Motor neuron (in vitro differentiated cells): ENCODE measurements at regions of chr22 and their contacts with region 1.

Region 1: DNA sequence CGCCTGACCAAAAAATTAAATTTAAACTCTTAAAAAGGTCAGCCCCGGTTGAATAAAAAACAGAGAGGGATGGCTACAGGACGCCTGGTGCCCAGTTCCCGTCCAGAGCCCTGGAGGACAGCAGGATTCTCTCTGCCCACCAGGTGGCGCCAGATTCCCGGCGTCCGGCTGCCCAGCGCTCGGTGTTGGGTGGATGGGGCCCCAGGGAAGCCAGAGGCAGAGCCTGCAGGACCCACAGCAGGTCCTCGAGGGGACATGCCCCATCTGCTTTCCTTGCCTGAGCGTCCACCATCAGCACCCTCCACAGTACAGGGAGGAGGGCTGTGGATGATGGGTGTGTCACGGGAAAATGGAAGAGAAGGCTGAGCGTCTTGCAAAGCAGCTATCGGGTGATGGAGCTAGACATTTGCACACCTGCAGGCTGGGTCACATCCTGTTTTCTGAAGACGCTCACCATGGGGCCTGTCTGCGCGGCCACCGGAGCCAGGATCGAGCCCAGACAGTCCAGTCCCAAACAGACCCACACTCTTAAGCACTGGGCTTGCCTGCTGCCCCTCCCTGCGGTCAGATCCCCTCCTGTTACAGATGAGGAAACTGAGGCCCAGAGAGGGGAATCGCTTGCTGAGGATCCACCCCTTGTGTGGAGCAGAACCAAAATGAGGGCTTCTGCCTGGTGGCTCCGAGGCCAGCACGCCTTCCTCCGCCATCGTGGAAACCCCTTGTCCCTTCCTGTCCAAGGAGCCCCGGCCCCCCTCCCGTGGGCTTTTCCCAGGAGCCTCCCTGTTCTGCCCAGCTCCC is 18.5 kb upstream of the CBX7 start:
- ATAC-seq: peak; percentile 76 to 98 (median 80)
- H3K4me3 ChIP-seq: no peak overlapping the region
- H3K27ac ChIP-seq: no peak overlapping the region
- H3K4me1 ChIP-seq: peaks cover 23 to 41% of the 10 kb centered on the region in 2 donors

Region 2: DNA sequence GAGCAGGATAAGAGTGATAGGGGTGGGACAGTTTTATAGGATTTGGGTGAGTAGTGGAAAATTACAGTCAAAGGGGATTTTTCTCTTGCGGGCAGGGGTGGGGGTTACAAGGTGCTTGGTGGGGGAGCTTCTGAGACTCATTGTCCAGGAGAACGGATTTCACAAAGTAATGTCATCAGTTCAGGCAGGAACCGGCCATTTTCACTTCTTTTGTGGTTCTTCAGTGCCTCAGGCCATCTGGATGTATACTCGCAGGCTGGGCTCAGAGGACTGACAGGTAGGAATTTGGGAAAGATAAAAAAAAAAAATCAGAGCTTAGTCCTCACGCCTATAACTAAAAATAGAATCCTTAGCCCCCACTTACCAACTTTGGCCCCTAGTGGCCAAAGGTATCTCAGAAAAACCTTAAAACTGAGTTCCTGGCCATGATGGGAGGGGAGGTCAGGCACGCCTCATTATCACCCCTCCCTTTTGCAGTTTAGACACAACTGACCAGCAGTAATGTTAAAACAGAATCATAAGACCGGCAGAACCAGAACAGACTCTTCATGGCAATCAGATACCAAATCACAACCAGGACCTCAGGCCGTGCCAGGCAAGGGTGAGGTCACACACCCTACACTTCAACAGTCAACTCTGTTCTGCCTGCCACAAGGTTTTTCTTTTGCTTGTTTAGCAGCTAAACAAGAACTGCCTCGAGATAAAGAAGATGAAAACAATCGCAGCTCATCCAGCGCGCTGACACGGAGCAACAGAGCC is 102.8 kb before region 1 on chr22:
- in situ Hi-C with region 1: no loop called
- ATAC-seq: no peak
- H3K4me3 ChIP-seq: no peak overlapping the region
- H3K27ac ChIP-seq: no peak overlapping the region
- H3K4me1 ChIP-seq: no peaks in the 10 kb centered on the region

Region 3: GRCh38 chr22:39110631-39111561 is 60.1 kb before region 1 on chr22:
- in situ Hi-C with region 1: no loop called
- ATAC-seq: peak in 5 of 8 experiments; percentile 26 to 70 (median 64)
- H3K4me3 ChIP-seq: no peak overlapping the region
- H3K27ac ChIP-seq: peak overlapping the region in 1 of 2 donors; percentile 36
- H3K4me1 ChIP-seq: peaks cover 23 to 30% of the 10 kb centered on the region in 2 donors

Region 4: DNA sequence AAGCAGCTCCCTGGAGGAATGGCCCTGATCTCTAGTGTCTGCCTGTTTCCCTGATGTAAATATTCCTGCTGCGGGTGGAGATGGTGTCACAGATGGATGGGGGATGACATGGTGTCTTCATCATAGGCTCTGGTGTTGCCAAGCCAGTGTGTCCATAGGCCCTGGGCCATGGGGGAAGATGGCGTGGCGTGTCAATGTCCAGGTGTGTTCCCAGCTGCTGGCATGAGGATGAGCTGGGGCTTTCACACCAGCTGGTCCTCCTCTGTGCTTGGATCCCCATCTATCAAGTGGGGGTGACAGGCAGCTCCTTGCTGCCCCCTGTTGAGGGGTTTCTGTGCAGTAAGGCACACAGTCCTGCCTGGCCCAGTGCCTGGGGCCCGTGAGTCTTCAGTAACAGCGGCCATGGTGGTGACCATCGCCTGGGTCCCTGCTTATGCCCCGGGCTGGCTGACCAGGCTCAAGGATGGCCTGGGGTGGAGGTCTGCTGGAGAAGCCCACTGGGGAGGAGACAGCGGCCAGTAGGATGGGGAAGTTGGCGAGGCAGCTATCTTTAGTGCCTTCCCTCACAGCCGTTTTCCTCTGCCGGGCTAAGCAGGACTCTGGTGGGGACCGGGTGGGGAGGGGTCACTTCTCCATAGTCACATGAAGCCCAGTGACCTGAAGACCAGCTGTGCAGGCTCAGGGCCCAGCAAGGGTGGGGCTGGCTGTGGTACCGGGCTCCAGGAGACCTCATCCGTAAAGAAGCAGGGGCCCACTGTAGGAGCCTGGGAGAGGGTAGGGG is 135.7 kb after region 1 on chr22:
- in situ Hi-C with region 1: loop called (anchors 5 to 25 kb)
- ATAC-seq: peak in 4 of 8 experiments; percentile 0 to 6 (median 4)
- H3K4me3 ChIP-seq: no peak overlapping the region
- H3K27ac ChIP-seq: no peak overlapping the region
- H3K4me1 ChIP-seq: peaks cover 14 to 21% of the 10 kb centered on the region in 2 donors

Region 5: DNA sequence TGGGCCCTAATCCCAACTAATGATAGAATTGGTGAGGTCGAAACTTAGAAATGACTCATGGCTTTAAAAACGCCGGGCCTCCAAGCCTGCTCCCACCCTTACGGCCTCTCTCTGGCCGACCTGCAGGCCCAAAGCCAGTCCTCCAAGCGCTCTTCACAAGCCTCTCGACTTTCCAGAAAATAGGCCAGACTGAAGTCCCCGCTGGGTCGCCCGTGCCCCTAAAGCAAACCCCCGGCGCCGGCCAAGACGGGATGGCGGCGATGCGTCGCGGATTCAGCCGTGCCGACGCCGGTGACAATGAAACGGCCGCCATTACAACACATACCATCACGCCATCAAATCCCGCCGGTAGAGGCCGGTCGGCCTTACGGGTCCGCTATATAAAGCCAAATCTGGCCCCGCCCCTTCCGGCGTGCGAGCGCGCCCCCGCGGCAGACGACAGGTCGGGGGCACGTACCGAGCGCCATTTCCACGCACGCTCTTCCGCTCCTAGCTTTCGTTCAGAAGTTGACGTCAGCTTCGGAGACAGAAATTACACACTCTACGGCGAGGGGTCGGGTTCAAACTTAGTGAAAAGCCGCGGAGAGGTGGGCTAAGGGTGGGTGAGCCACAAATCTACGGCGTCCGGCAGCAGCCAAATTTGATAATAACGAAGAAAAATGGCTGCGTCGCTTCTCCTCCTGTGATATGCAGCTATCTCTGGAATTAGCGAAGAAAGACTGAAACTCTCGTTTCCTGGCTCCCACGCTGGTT is 148.4 kb after region 1 on chr22 and contains the start of gene RPL3:
- in situ Hi-C with region 1: loop called in 5 of 9 experiments (anchors 10 to 25 kb)
- ATAC-seq: peak; percentile 58 to 89 (median 80)
- H3K4me3 ChIP-seq: peak within 1 kb of the TSS; percentile 45 to 93 (median 78)
- H3K27ac ChIP-seq: peak within 1 kb of the TSS; percentile 96 to 98
- H3K4me1 ChIP-seq: peaks cover 25 to 32% of the 10 kb centered on the region in 2 donors
- total RNA-seq, gene RPL3: 1,236 to 3,241 (median 1,964) TPM

Region 6: DNA sequence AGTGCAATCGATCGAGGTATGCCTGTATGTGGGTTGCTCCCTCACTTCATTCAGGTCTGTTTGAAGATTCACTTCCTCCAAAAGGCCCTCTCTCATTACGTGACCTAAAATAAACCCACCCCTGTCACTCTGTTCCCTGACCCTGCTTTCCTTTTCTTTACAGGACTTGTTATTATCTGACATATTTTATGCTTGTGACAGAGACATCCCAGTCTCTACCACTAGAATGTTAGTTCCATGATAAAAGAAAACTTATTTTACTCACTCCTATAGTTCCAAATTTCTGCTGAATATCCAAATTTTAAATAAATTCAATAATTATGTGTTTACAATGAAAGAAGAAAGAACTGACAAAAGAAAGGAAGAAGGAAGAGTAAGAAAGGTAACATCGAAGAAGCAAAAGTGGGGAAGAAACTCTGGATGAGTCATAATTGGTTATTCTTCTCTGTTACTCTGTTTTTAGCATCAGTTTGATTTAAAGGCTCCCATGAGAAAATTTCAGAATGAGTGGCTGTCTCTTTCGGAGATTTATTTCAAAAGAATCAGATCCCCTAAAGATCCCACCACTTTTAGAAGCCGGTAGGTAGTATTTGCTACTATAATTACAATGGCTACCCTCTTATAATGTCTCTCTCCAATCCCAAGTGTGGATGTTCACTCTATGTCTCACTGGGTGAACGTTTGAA is 689.0 kb after region 1 on chr22:
- in situ Hi-C with region 1: no loop called
- ATAC-seq: no peak
- H3K4me3 ChIP-seq: no peak overlapping the region
- H3K27ac ChIP-seq: no peak overlapping the region
- H3K4me1 ChIP-seq: no peaks in the 10 kb centered on the region